CD4-positive, alpha-beta T cell (primary cell): ENCODE measurements at regions of chr14 and their contacts with region 1.

Region 1: GRCh38 chr14:52791203-52792096 is at the start of gene GNPNAT1:
- DNase-seq: peak; percentile 79 to 97 (median 87)
- ATAC-seq: peak; percentile 97
- H3K4me3 ChIP-seq: peak within 1 kb of the TSS; percentile 95
- H3K4me3 Mint-ChIP-seq: peak within 1 kb of the TSS; percentile 94
- H3K27ac ChIP-seq: peak within 1 kb of the TSS; percentile 64 to 78
- H3K27ac Mint-ChIP-seq: peak within 1 kb of the TSS; percentile 92
- H3K4me1 ChIP-seq: peaks cover 21% of the 10 kb centered on the region
- H3K4me1 Mint-ChIP-seq: peaks cover 51% of the 10 kb centered on the region
- H3K27me3 ChIP-seq: no peaks in the 10 kb centered on the region
- H3K27me3 Mint-ChIP-seq: no peaks in the 10 kb centered on the region
- CTCF ChIP-seq: no peak
- total RNA-seq, gene GNPNAT1: 3.8 to 4.6 TPM

Region 2: GRCh38 chr14:52729925-52730667 is 61.4 kb before region 1 on chr14 and contains the start of gene STYX:
- CTCF ChIA-PET with region 1: no interaction called
- POLR2A ChIA-PET with region 1: interaction called, 3 read pairs
- intact Hi-C with region 1: loop called (anchors 2 kb)
- DNase-seq: peak; percentile 94 to 100 (median 98)
- ATAC-seq: peak; percentile 95
- H3K4me3 ChIP-seq: peak within 1 kb of the TSS; percentile 100
- H3K4me3 Mint-ChIP-seq: peak within 1 kb of the TSS; percentile 93
- H3K27ac ChIP-seq: peak within 1 kb of the TSS; percentile 84 to 89
- H3K27ac Mint-ChIP-seq: peak within 1 kb of the TSS; percentile 94
- H3K4me1 ChIP-seq: peaks cover 36% of the 10 kb centered on the region
- H3K4me1 Mint-ChIP-seq: peaks cover 36% of the 10 kb centered on the region
- H3K27me3 ChIP-seq: no peaks in the 10 kb centered on the region
- H3K27me3 Mint-ChIP-seq: no peaks in the 10 kb centered on the region
- CTCF ChIP-seq: no peak
- total RNA-seq, gene STYX: 15.3 to 16.2 TPM